Activated CD8-positive, alpha-beta T cell treated with anti-CD3 and anti-CD28 coated beads for 36 hours (primary cell): ENCODE measurements at regions of chr7 and their contacts with region 1.

Region 1: GRCh38 chr7:144174613-144175012 is 8.7 kb upstream of the CTAGE4 start:
- DNase-seq: no peak
- ATAC-seq: no peak
- H3K4me3 Mint-ChIP-seq: no peak overlapping the region
- H3K27ac Mint-ChIP-seq: no peak overlapping the region
- H3K4me1 Mint-ChIP-seq: no peaks in the 10 kb centered on the region
- H3K27me3 Mint-ChIP-seq: peaks cover 4% of the 10 kb centered on the region
- CTCF ChIP-seq: no peak

Region 2: GRCh38 chr7:144391823-144392255 is 217.2 kb after region 1 on chr7:
- CTCF ChIA-PET with region 1: interaction called, 14 read pairs
- POLR2A ChIA-PET with region 1: no interaction called
- intact Hi-C with region 1: no loop called
- DNase-seq: peak; percentile 21
- ATAC-seq: peak; percentile 78
- H3K4me3 Mint-ChIP-seq: peak overlapping the region; percentile 44
- H3K27ac Mint-ChIP-seq: no peak overlapping the region
- H3K4me1 Mint-ChIP-seq: peaks cover 4% of the 10 kb centered on the region
- H3K27me3 Mint-ChIP-seq: peaks cover 1% of the 10 kb centered on the region
- CTCF ChIP-seq: peak; percentile 66